ENCODE measurements at regions of chr2 and their contacts with region 1.

Region 1: GRCh38 chr2:197515739-197516392 is at the start of gene MOB4:
- DNase-seq: peak; percentile 96
- ATAC-seq: peak; percentile 93
- H3K4me3 Mint-ChIP-seq: peak within 1 kb of the TSS; percentile 88
- H3K27ac Mint-ChIP-seq: peak within 1 kb of the TSS; percentile 95
- H3K4me1 Mint-ChIP-seq: peaks cover 23% of the 10 kb centered on the region
- H3K27me3 Mint-ChIP-seq: no peaks in the 10 kb centered on the region
- total RNA-seq, gene MOB4: 18.0 to 24.5 TPM

Region 2: GRCh38 chr2:197499594-197500526 is 16.0 kb before region 1 on chr2 and contains the starts of genes HSPD1 and HSPE1:
- CTCF ChIA-PET with region 1: interaction called, 13 read pairs
- DNase-seq: peak; percentile 99
- ATAC-seq: peak; percentile 86
- H3K4me3 Mint-ChIP-seq: peak within 1 kb of the TSS; percentile 100
- H3K27ac Mint-ChIP-seq: peak within 1 kb of the TSS; percentile 98
- H3K4me1 Mint-ChIP-seq: peaks cover 57% of the 10 kb centered on the region
- H3K27me3 Mint-ChIP-seq: no peaks in the 10 kb centered on the region
- total RNA-seq, gene HSPD1: 298 to 427 TPM
- total RNA-seq, gene HSPE1: 149 to 170 TPM

Region 3: DNA sequence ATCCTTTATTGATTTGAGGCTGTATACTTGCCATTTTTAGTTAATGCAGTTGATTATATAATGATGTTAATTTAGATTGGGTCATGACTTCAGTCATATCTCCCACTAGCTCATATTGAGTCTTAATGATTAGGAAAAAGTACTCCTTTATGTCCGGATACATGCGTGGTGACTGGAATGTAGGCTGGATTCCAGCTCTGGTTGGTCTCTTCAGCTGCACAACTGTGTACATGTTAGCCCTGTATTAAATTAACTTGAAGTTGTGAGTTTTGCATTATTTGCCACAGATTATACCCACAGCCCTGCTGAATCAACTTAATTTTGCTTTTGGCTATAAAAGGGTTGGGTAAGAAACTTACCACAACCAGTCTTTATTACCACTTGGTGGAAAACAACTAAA is 22.5 kb after region 1 on chr2:
- CTCF ChIA-PET with region 1: no interaction called
- DNase-seq: no peak
- ATAC-seq: no peak
- H3K4me3 Mint-ChIP-seq: no peak overlapping the region
- H3K27ac Mint-ChIP-seq: no peak overlapping the region
- H3K4me1 Mint-ChIP-seq: peaks cover 25% of the 10 kb centered on the region
- H3K27me3 Mint-ChIP-seq: no peaks in the 10 kb centered on the region

Region 4: GRCh38 chr2:197661626-197662025 is 145.8 kb after region 1 on chr2:
- CTCF ChIA-PET with region 1: no interaction called
- DNase-seq: no peak
- ATAC-seq: no peak
- H3K4me3 Mint-ChIP-seq: no peak overlapping the region
- H3K27ac Mint-ChIP-seq: no peak overlapping the region
- H3K4me1 Mint-ChIP-seq: peaks cover 2% of the 10 kb centered on the region
- H3K27me3 Mint-ChIP-seq: peaks cover 2% of the 10 kb centered on the region

Region 5: GRCh38 chr2:197705121-197705911 is 189.4 kb after region 1 on chr2 and contains the start of gene MARS2:
- CTCF ChIA-PET with region 1: interaction called, 11 read pairs
- DNase-seq: peak; percentile 94
- ATAC-seq: peak; percentile 88
- H3K4me3 Mint-ChIP-seq: peak within 1 kb of the TSS; percentile 83
- H3K27ac Mint-ChIP-seq: peak within 1 kb of the TSS; percentile 94
- H3K4me1 Mint-ChIP-seq: peaks cover 47% of the 10 kb centered on the region
- H3K27me3 Mint-ChIP-seq: no peaks in the 10 kb centered on the region
- total RNA-seq, gene MARS2: 17.8 to 22.0 TPM

Measured in activated CD8-positive, alpha-beta memory T cell treated with anti-CD3 and anti-CD28 coated beads, Interleukin-2, amount 10 ng/mL, durations not matched to agents 7 days and 5 days (primary cell).